ENCODE measurements at regions of chr7 and their contacts with region 1.

Region 1: GRCh38 chr7:106461993-106462859 is 177.4 kb upstream of the NAMPT start:
- DNase-seq: peak; percentile 15
- CTCF ChIP-seq: peak; percentile 38

Region 2: DNA sequence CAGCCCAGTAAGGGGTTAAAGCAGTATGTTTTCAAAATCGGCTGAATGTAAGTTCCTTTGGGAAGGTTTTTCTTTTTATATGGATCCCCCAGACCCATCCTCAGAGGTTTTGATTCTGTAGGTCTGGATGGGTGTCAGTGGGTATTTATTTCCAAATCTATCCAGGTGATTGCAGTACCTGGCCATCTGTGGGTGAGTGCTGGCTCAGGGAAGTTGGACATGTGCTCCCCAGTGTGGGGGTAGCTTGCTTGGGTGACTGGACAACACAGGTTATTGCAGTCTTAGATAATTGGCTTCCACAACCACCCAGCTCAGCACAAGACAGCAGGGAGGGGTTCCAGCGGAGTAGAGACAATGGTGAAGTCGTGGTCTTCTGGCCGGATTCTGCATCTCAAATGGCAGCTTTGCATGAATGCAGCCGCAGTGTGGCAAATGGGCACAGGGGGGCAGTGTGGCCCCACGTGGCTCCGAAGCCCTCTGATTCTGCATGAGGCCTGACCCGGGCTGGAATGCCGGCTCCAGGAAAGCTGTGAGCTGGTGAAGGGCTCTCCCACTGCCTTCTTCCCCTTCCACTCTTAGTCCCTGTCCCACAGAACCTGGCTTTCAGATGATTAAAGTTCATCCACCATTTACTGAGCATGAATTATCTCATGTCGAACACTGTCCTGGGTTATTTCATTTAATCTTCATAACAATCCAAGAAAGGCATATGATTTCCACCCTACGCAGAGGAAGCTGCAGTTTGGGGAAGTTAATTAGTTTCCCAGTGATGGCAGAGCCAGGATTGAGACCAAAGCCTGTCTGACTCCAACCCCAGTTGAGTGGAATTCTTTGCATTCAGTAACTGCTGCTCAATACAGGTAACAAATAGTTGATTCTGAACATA is 285.6 kb before region 1 on chr7:
- in situ Hi-C with region 1: loop called (anchors 5 kb)
- DNase-seq: peak; percentile 71
- CTCF ChIP-seq: peak; percentile 97